ENCODE measurements at regions of chr1 and their contacts with region 1.

Region 1: GRCh38 chr1:93846211-93846991 is 32.6 kb downstream of the DNTTIP2 start:
- DNase-seq: peak; percentile 74 to 94 (median 83)
- ATAC-seq: peak; percentile 33
- H3K4me3 ChIP-seq: peak overlapping the region; percentile 82 to 98
- H3K4me3 Mint-ChIP-seq: peak overlapping the region; percentile 94
- H3K27ac ChIP-seq: peak overlapping the region; percentile 86 to 91
- H3K27ac Mint-ChIP-seq: peak overlapping the region; percentile 96
- H3K4me1 ChIP-seq: peaks cover 21% of the 10 kb centered on the region
- H3K4me1 Mint-ChIP-seq: peaks cover 31% of the 10 kb centered on the region
- H3K27me3 ChIP-seq: no peaks in the 10 kb centered on the region
- H3K27me3 Mint-ChIP-seq: no peaks in the 10 kb centered on the region
- CTCF ChIP-seq: no peak

Region 2: DNA sequence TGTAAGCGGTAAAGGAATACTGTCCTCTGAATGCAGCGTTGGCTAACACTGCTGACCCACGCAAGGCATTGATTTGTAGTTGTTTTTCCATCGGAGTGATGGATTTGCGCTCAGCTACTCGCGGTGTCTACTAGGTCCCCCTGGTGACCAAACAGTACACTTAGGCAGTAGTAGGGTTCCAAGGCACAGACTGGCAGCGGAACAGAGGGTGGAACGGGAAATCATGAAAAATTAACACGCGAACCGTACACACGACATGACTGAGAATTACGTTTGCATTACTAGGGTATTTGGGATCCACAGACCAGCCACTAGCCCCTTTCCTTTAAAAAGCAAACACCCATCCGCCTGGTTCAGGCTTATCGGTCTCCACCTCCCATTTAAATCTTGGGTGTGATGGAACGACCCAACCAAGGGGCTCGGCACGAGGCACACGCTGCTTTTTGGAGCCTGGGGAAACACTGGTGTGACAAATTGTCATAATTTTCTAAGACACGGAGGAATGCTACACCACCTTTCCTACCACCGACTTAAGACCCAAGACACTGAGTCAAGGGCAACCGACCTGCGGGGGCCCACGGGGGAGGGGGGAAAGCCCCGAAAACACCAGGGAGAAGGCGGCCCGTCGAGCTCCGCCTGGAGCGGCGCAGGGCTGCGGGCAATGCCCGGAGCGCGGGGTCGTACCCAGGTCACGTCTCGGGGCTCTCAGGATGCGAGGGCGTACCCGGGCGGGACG is 885.8 kb before region 1 on chr1:
- CTCF ChIA-PET with region 1: no interaction called
- POLR2A ChIA-PET with region 1: interaction called, 4 read pairs
- intact Hi-C with region 1: loop called in 1 of 2 experiments (anchors 5 kb)
- DNase-seq: peak; percentile 40 to 90 (median 62)
- ATAC-seq: peak; percentile 41
- H3K4me3 ChIP-seq: peak overlapping the region; percentile 81 to 82
- H3K4me3 Mint-ChIP-seq: peak overlapping the region; percentile 92
- H3K27ac ChIP-seq: peak overlapping the region; percentile 85 to 87
- H3K27ac Mint-ChIP-seq: peak overlapping the region; percentile 96
- H3K4me1 ChIP-seq: peaks cover 57% of the 10 kb centered on the region
- H3K4me1 Mint-ChIP-seq: peaks cover 40% of the 10 kb centered on the region
- H3K27me3 ChIP-seq: no peaks in the 10 kb centered on the region
- H3K27me3 Mint-ChIP-seq: no peaks in the 10 kb centered on the region
- CTCF ChIP-seq: peak; percentile 58

Region 3: GRCh38 chr1:93078986-93079654 is 767.3 kb before region 1 on chr1 and contains the start of gene MTF2:
- CTCF ChIA-PET with region 1: interaction called, 4 read pairs
- POLR2A ChIA-PET with region 1: interaction called, 10 read pairs
- intact Hi-C with region 1: loop called (anchors 1 to 5 kb)
- DNase-seq: peak; percentile 85 to 96 (median 91)
- ATAC-seq: peak; percentile 86
- H3K4me3 ChIP-seq: peak within 1 kb of the TSS; percentile 91 to 92
- H3K4me3 Mint-ChIP-seq: peak within 1 kb of the TSS; percentile 97
- H3K27ac ChIP-seq: peak within 1 kb of the TSS; percentile 76 to 90
- H3K27ac Mint-ChIP-seq: peak within 1 kb of the TSS; percentile 96
- H3K4me1 ChIP-seq: peaks cover 39% of the 10 kb centered on the region
- H3K4me1 Mint-ChIP-seq: peaks cover 50% of the 10 kb centered on the region
- H3K27me3 ChIP-seq: no peaks in the 10 kb centered on the region
- H3K27me3 Mint-ChIP-seq: no peaks in the 10 kb centered on the region
- CTCF ChIP-seq: no peak
- total RNA-seq, gene MTF2: 41.4 to 43.3 TPM

Region 4: GRCh38 chr1:93345633-93346420 is 500.6 kb before region 1 on chr1 and contains the start of gene DR1:
- CTCF ChIA-PET with region 1: interaction called, 3 read pairs
- POLR2A ChIA-PET with region 1: interaction called, 5 read pairs
- intact Hi-C with region 1: loop called (anchors 1 to 2 kb)
- DNase-seq: peak; percentile 81 to 94 (median 90)
- ATAC-seq: peak; percentile 74
- H3K4me3 ChIP-seq: peak within 1 kb of the TSS; percentile 80 to 81
- H3K4me3 Mint-ChIP-seq: peak within 1 kb of the TSS; percentile 95
- H3K27ac ChIP-seq: peak within 1 kb of the TSS; percentile 72 to 91
- H3K27ac Mint-ChIP-seq: peak within 1 kb of the TSS; percentile 98
- H3K4me1 ChIP-seq: peaks cover 32% of the 10 kb centered on the region
- H3K4me1 Mint-ChIP-seq: peaks cover 51% of the 10 kb centered on the region
- H3K27me3 ChIP-seq: no peaks in the 10 kb centered on the region
- H3K27me3 Mint-ChIP-seq: no peaks in the 10 kb centered on the region
- CTCF ChIP-seq: no peak
- total RNA-seq, gene DR1: 49.1 to 49.9 TPM

Region 5: DNA sequence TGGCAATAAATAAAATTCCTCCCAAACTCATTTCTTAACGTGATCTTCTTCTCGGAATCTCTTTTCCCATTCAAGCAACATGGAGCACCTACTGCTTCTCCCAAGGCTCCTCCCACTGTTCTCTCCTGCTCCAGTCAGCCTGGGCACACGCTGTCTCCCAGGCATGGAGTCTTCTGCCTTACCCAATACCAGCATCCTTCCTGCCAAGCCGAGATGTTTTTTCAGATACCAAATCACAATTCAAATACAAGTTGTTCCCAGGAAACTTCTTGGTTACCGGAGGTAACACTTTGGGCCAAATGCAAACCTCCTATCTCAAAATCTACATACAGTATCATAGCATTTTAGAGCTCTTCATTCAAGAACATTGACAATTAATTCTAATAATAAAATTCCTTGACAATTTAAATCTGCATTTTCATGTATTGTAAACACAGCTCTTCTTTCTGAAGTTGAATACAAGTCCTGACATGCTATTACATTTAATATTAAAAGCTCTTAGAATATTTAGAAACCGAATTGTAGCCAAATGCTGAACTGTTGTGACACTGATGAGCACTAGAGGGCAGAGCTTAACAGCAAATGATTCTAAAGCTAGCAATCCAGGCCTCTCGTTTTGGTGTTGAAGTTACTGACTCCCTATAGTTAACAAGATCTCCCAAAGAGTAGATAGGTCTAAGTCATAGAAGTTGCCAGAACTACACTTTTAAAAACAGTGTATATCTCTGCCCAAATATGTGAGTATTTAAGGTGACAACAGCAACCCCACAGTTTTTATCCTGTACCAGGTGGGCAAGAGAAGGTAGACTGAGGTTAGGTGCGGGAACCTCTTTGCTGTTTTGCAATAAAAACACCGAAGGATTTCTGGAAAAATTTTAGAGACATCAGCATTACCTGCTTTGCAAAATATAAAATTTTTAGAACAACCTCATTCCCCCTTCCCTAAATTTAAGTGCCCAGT is 217.0 kb before region 1 on chr1:
- CTCF ChIA-PET with region 1: interaction called, 173 read pairs
- POLR2A ChIA-PET with region 1: interaction called, 9 read pairs
- intact Hi-C with region 1: loop called (anchors 1 kb)
- DNase-seq: peak; percentile 8 to 78 (median 37)
- ATAC-seq: peak; percentile 93
- H3K4me3 ChIP-seq: no peak overlapping the region
- H3K4me3 Mint-ChIP-seq: no peak overlapping the region
- H3K27ac ChIP-seq: no peak overlapping the region
- H3K27ac Mint-ChIP-seq: no peak overlapping the region
- H3K4me1 ChIP-seq: no peaks in the 10 kb centered on the region
- H3K4me1 Mint-ChIP-seq: no peaks in the 10 kb centered on the region
- H3K27me3 ChIP-seq: no peaks in the 10 kb centered on the region
- H3K27me3 Mint-ChIP-seq: no peaks in the 10 kb centered on the region
- CTCF ChIP-seq: peak; percentile 90

Region 6: DNA sequence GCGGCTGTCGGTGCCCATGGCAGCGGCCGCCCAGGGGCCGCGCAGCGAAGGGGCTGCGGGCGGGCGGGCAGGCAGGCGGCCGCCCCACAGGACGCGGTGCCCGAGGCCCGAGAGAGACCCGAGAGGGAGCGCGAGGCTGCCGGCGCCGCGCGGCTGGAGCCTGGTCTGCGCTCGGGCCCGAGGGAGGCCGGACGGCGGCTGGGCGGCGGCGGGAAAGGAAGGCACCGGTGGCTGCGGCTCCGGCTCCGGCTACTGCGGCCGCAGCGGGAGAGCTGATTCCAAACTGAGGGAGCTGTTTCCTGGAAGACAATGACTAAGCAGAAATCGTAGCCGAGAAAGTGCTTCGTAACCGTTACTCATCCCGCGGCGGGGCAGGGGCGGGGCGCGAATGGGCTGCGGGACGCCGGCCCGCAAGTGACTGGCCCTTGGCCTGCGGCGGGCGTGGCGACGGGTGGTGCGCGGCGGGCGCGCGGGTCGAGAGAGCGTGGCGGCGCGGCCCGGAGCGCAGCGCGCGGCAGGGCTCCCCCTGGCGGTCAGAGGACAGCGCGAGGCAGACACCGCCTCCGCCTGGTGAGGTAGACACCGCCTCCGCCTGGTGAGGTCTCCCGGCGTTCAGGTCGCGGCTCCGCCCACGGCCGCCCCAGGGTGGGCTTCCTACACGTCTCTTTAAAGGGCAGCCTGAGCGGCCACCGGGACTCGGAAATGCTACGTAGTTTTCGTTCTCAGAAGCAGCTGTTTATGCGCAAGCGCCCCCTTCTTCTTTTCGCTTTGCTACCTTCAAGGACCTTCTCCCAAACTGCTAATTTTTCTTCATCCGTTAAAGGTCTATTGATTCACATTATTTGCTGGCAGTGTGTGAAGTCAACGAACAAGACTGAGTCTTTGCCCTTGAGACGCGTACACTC is 63.0 kb after region 1 on chr1 and contains the start of gene GCLM:
- CTCF ChIA-PET with region 1: interaction called, 7 read pairs
- POLR2A ChIA-PET with region 1: interaction called, 21 read pairs
- intact Hi-C with region 1: loop called (anchors 1 kb)
- DNase-seq: peak; percentile 76 to 95 (median 91)
- ATAC-seq: peak; percentile 89
- H3K4me3 ChIP-seq: peak within 1 kb of the TSS; percentile 62 to 67
- H3K4me3 Mint-ChIP-seq: peak within 1 kb of the TSS; percentile 88
- H3K27ac ChIP-seq: peak within 1 kb of the TSS; percentile 72 to 76
- H3K27ac Mint-ChIP-seq: peak within 1 kb of the TSS; percentile 92
- H3K4me1 ChIP-seq: peaks cover 12% of the 10 kb centered on the region
- H3K4me1 Mint-ChIP-seq: peaks cover 37% of the 10 kb centered on the region
- H3K27me3 ChIP-seq: no peaks in the 10 kb centered on the region
- H3K27me3 Mint-ChIP-seq: no peaks in the 10 kb centered on the region
- CTCF ChIP-seq: peak; percentile 86
- total RNA-seq, gene GCLM: 6.4 to 6.8 TPM

Region 7: DNA sequence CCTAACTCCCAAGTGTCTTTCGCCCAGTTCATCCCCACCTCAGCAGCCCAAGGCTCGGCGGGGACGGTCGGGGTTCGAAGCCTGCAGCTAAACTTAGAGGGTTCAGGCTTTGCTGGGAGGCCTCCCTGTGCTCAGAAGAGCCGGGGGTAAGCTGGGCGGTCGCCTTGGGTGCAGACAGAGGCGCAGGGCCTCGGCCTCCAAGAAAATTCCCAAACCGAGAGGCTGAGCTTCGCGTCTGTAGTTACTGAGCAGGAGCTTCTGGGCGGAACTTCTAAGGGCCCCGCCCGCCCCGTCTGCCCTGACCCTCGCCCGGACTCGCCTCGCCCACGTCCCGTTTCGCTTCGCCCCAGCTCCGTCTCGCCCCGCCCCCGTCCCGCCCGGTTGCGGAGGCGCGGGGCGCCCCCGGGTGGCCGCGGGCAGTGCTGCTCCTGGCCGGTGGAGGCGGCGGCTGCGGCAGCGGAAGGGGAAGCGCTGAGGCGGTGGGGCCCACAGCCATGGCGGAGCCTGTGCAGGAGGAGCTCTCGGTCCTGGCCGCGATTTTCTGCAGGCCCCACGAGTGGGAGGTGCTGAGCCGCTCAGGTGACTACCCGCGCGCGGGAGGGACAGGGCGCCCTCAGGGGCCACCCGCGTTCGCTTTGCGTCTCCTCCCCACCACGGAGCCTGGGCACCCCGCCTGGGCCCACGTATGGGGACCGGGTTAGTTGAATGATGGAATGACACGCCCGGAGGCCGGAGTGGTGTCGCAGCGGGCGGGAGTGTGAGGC is 1387.5 kb after region 1 on chr1 and contains the start of gene RWDD3:
- CTCF ChIA-PET with region 1: no interaction called
- POLR2A ChIA-PET with region 1: no interaction called
- intact Hi-C with region 1: loop called in 1 of 2 experiments (anchors 2 kb)
- DNase-seq: peak; percentile 89 to 96 (median 91)
- ATAC-seq: peak; percentile 93
- H3K4me3 ChIP-seq: peak within 1 kb of the TSS; percentile 79 to 93
- H3K4me3 Mint-ChIP-seq: peak within 1 kb of the TSS; percentile 85
- H3K27ac ChIP-seq: peak within 1 kb of the TSS; percentile 72 to 73
- H3K27ac Mint-ChIP-seq: peak within 1 kb of the TSS; percentile 90
- H3K4me1 ChIP-seq: peaks cover 15% of the 10 kb centered on the region
- H3K4me1 Mint-ChIP-seq: peaks cover 46% of the 10 kb centered on the region
- H3K27me3 ChIP-seq: no peaks in the 10 kb centered on the region
- H3K27me3 Mint-ChIP-seq: peaks cover 8% of the 10 kb centered on the region
- CTCF ChIP-seq: peak; percentile 79
- total RNA-seq, gene RWDD3: 14.9 to 17.8 TPM

Measured in CD8-positive, alpha-beta T cell (primary cell).